ENCODE measurements at regions of chr11 and their contacts with region 1.

Region 1: DNA sequence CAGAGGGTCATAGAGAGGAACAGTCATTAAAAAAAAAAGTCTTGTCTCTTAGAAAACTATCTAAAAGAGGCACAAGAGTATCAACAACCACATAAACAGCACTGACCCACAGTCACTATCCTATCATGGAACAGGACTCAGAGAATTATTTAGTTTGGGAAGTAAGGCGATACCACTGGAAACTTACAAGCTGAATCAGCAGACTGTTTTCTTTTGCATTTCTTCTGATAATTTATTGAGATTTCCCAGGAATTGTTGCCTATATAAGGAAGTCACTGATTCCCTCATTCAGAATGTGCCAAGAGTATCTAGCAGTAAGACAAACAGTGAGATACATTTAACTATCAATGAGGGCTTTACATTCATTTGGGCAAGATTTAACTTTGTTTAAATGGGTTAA is 304.1 kb downstream of the GUCY1A2 start:
- DNase-seq: peak; percentile 28
- ATAC-seq: peak; percentile 51
- H3K4me3 ChIP-seq: no peak overlapping the region
- H3K27ac ChIP-seq: no peak overlapping the region
- H3K4me1 ChIP-seq: peaks cover 21% of the 10 kb centered on the region
- H3K27me3 ChIP-seq: no peaks in the 10 kb centered on the region
- CTCF ChIP-seq: no peak

Region 2: GRCh38 chr11:107123022-107123421 is 408.8 kb after region 1 on chr11:
- CTCF ChIA-PET with region 1: no interaction called
- POLR2A ChIA-PET with region 1: interaction called, 14 read pairs
- intact Hi-C with region 1: no loop called
- DNase-seq: peak; percentile 33
- ATAC-seq: peak; percentile 60
- H3K4me3 ChIP-seq: no peak overlapping the region
- H3K27ac ChIP-seq: no peak overlapping the region
- H3K4me1 ChIP-seq: no peaks in the 10 kb centered on the region
- H3K27me3 ChIP-seq: no peaks in the 10 kb centered on the region
- CTCF ChIP-seq: peak; percentile 66